B cell (primary cell): ENCODE measurements at regions of chr1 and their contacts with region 1.

Region 1: GRCh38 chr1:212477014-212477679 is 44.4 kb downstream of the NENF start:
- DNase-seq: peak; percentile 85
- ATAC-seq: peak; percentile 94
- H3K4me3 ChIP-seq: no peak overlapping the region
- H3K4me3 Mint-ChIP-seq: no peak overlapping the region
- H3K27ac ChIP-seq: no peak overlapping the region
- H3K27ac Mint-ChIP-seq: no peak overlapping the region
- H3K4me1 ChIP-seq: peaks cover 4 to 7% of the 10 kb centered on the region in 2 donors
- H3K4me1 Mint-ChIP-seq: peaks cover 6% of the 10 kb centered on the region
- H3K27me3 ChIP-seq: no peaks in the 10 kb centered on the region
- H3K27me3 Mint-ChIP-seq: peaks cover 22% of the 10 kb centered on the region
- CTCF ChIP-seq: peak; percentile 87

Region 2: DNA sequence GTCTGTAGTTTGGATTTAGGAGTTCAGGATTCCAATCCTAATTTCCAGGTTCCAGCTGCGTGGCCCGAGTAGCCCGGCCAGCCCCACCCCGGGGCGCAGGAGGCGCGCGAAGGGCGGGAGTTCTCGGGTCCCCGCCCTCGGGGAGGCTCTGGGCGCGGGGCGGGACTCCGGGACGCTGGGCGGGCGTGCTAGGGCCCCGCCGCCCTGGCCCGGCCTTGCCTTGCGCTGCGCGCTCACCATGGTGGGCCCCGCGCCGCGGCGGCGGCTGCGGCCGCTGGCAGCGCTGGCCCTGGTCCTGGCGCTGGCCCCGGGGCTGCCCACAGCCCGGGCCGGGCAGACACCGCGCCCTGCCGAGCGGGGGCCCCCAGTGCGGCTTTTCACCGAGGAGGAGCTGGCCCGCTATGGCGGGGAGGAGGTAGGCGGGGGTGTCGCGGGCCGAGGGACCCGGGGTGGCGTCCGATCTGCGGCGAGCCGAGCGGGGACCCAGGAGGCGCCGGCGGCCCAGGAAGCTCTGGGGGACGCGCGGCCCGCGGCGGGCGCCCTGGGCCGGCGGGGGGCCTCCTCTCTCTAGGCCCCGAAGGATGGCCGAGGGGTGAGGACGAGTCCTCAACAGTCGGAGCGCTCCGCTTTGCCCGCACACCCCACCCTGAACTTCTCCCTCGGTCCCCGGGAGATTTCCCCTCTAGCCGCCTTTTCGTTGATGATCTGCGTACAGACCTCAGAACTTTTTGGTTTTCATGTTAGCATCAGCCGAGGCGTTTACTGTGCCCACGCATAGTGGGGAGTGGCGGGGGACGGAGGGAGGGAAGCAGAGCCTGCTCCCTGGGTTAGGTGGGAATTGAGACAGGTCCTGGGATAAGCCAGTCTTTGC is 44.2 kb before region 1 on chr1 and contains the start of gene NENF:
- CTCF ChIA-PET with region 1: no interaction called
- POLR2A ChIA-PET with region 1: no interaction called
- intact Hi-C with region 1: no loop called
- DNase-seq: peak; percentile 81
- ATAC-seq: peak; percentile 99
- H3K4me3 ChIP-seq: peak within 1 kb of the TSS; percentile 26 to 82 (median 58)
- H3K4me3 Mint-ChIP-seq: peak within 1 kb of the TSS; percentile 82
- H3K27ac ChIP-seq: peak within 1 kb of the TSS in 1 of 2 donors; percentile 65
- H3K27ac Mint-ChIP-seq: peak within 1 kb of the TSS; percentile 33
- H3K4me1 ChIP-seq: peaks cover 12 to 15% of the 10 kb centered on the region in 2 donors
- H3K4me1 Mint-ChIP-seq: peaks cover 25% of the 10 kb centered on the region
- H3K27me3 ChIP-seq: no peaks in the 10 kb centered on the region
- H3K27me3 Mint-ChIP-seq: no peaks in the 10 kb centered on the region
- CTCF ChIP-seq: no peak
- total RNA-seq, gene NENF: 20.3 and 22.7 TPM in 2 replicates

Region 3: GRCh38 chr1:212463565-212464285 is 13.4 kb before region 1 on chr1:
- CTCF ChIA-PET with region 1: interaction called, 13 read pairs
- POLR2A ChIA-PET with region 1: no interaction called
- intact Hi-C with region 1: no loop called
- DNase-seq: no peak
- ATAC-seq: no peak
- H3K4me3 ChIP-seq: no peak overlapping the region
- H3K4me3 Mint-ChIP-seq: no peak overlapping the region
- H3K27ac ChIP-seq: no peak overlapping the region
- H3K27ac Mint-ChIP-seq: no peak overlapping the region
- H3K4me1 ChIP-seq: no peaks in the 10 kb centered on the region
- H3K4me1 Mint-ChIP-seq: no peaks in the 10 kb centered on the region
- H3K27me3 ChIP-seq: no peaks in the 10 kb centered on the region
- H3K27me3 Mint-ChIP-seq: peaks cover 6% of the 10 kb centered on the region
- CTCF ChIP-seq: no peak

Region 4: DNA sequence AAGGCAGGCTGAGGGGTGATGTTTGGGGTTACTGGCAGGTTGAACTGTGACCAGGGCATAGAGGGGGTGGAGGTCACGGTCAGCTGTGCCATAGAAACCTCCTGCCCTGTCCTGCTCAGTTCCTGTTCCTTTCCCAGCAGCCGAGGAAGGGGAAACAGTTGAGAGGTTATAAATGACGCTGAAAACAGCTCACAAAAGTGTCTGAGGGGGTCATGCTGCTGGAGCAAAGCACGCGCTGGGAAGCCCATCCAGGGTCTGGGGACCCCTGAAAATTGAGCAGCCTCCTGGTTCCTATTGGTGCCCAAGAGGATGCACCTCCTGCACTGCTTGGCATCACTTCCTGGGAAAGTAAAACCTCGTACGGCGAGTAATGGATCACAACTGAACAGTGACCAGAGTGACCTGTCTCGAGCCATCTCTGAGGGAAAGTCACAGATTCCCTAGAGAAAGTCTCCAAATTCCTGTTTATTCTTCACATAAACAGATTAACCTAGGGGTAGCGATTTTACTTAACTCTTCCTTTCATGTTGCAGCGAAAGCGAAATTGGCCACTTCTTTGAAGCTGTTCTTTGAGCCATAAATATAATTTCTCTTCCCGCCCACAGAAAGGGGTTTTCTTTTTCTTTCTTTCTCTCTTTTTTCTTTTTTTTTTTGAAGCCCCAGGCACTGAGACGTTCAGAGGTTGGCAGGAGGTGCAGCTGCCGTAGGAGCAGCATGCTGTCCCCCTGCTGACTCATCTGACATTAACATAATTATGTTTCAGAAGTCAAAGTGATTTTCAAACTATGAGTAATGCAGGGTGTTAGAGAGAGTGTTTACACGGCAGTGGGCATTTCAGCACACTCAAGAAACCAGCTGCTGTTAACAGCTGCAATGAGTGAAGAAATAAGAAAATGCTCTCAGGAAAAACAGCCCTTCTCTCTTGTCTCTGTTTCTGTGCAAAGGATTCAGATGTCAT is 89.7 kb after region 1 on chr1:
- CTCF ChIA-PET with region 1: interaction called, 9 read pairs
- POLR2A ChIA-PET with region 1: no interaction called
- intact Hi-C with region 1: loop called (anchors 5 kb)
- DNase-seq: peak; percentile 54
- ATAC-seq: peak; percentile 97
- H3K4me3 ChIP-seq: peak overlapping the region; percentile 66 to 96 (median 84)
- H3K4me3 Mint-ChIP-seq: peak overlapping the region; percentile 90
- H3K27ac ChIP-seq: peak overlapping the region; percentile 21 to 49
- H3K27ac Mint-ChIP-seq: peak overlapping the region; percentile 90
- H3K4me1 ChIP-seq: peaks cover 5 to 14% of the 10 kb centered on the region in 2 donors
- H3K4me1 Mint-ChIP-seq: peaks cover 21% of the 10 kb centered on the region
- H3K27me3 ChIP-seq: no peaks in the 10 kb centered on the region
- H3K27me3 Mint-ChIP-seq: peaks cover 6% of the 10 kb centered on the region
- CTCF ChIP-seq: no peak

Region 5: DNA sequence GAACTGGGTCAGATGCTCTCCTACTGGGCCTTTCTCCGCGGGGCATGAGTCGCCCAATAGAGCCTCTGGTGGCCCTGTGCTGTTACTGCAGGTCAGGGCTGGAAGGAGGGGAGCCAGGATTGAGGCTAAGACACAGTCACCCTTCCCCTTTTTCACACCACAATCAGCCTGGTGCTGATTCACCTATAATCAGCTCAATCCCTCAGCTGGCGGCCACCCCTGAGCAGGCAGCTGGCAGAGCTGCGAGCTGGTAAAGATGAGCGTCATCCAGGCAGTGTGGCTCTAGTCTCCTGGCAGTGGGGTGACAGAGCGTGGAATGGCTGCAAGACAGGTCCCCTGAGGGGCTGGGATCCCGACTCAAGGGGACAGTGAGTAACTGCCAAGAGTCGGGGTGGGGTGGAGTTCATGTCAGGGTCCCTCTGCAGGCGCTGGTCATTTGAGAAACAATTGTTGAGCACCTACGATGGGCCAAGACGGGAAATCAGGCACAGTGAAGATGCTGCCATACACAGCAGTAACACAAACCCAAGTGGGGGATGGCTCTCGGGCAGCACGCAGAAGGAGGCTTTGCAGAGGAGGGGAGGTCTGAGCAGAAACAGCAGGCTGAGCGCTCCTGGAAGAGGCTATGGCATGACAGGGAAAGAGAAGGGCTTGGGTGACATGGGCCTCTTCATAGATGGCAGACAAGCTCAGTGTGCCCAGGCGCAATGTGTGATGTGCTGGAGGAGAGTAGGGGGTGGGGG is 153.2 kb after region 1 on chr1:
- CTCF ChIA-PET with region 1: interaction called, 8 read pairs
- POLR2A ChIA-PET with region 1: interaction called, 4 read pairs
- intact Hi-C with region 1: loop called (anchors 1 kb)
- DNase-seq: peak; percentile 82
- ATAC-seq: peak; percentile 98
- H3K4me3 ChIP-seq: no peak overlapping the region
- H3K4me3 Mint-ChIP-seq: no peak overlapping the region
- H3K27ac ChIP-seq: no peak overlapping the region
- H3K27ac Mint-ChIP-seq: no peak overlapping the region
- H3K4me1 ChIP-seq: peaks cover 12 to 19% of the 10 kb centered on the region in 2 donors
- H3K4me1 Mint-ChIP-seq: peaks cover 9% of the 10 kb centered on the region
- H3K27me3 ChIP-seq: peaks cover 0 to 9% (median 1%) of the 10 kb centered on the region in 4 experiments
- H3K27me3 Mint-ChIP-seq: peaks cover 19% of the 10 kb centered on the region
- CTCF ChIP-seq: peak; percentile 86

Region 6: DNA sequence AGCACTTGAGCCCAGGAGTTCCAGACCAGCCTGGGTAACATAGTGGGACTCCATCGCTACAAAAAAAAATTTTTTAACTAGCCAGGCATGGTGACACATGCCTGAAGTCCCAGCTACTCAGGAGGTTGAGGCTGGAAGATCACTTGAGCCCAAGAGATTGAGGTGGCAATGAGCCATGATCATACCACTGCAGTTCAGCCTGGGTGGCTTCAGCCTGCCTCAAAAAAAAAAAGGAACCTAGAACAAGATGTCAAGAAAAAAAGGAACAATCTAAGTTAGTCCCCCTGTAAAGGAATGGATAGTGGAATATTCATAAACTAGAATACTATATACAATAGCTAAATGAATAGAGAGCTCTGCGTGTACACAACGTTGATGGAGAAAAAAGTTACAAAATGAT is 300.0 kb after region 1 on chr1:
- CTCF ChIA-PET with region 1: interaction called, 40 read pairs
- POLR2A ChIA-PET with region 1: no interaction called
- intact Hi-C with region 1: loop called (anchors 1 kb)
- DNase-seq: no peak
- ATAC-seq: no peak
- H3K4me3 ChIP-seq: no peak overlapping the region
- H3K4me3 Mint-ChIP-seq: no peak overlapping the region
- H3K27ac ChIP-seq: no peak overlapping the region
- H3K27ac Mint-ChIP-seq: no peak overlapping the region
- H3K4me1 ChIP-seq: no peaks in the 10 kb centered on the region
- H3K4me1 Mint-ChIP-seq: peaks cover 18% of the 10 kb centered on the region
- H3K27me3 ChIP-seq: no peaks in the 10 kb centered on the region
- H3K27me3 Mint-ChIP-seq: no peaks in the 10 kb centered on the region
- CTCF ChIP-seq: no peak

Region 7: GRCh38 chr1:212994926-212995325 is 517.8 kb after region 1 on chr1:
- CTCF ChIA-PET with region 1: interaction called, 32 read pairs
- POLR2A ChIA-PET with region 1: no interaction called
- intact Hi-C with region 1: loop called (anchors 1 kb)
- DNase-seq: no peak
- ATAC-seq: no peak
- H3K4me3 ChIP-seq: no peak overlapping the region
- H3K4me3 Mint-ChIP-seq: no peak overlapping the region
- H3K27ac ChIP-seq: no peak overlapping the region
- H3K27ac Mint-ChIP-seq: no peak overlapping the region
- H3K4me1 ChIP-seq: no peaks in the 10 kb centered on the region
- H3K4me1 Mint-ChIP-seq: peaks cover 2% of the 10 kb centered on the region
- H3K27me3 ChIP-seq: no peaks in the 10 kb centered on the region
- H3K27me3 Mint-ChIP-seq: no peaks in the 10 kb centered on the region
- CTCF ChIP-seq: no peak

Region 8: DNA sequence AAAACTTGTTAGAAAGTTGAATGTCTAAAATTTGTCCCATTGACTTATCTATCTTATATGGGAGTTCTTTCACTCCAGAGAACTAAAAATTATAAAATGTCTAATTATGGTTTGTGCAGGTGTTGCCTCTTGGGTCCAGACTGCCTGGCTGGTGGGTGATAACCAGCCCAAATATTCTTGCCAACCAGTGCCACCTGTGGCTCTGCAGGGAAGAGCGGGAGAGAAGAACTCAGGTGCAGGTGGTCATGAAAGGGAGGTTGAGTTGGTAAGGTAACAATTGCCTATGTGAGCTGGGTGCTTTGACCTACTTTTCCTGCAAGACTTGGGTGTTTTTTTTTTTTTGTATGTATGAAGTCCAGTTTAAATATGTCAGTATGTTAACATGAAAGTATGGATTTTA is 584.1 kb after region 1 on chr1:
- CTCF ChIA-PET with region 1: no interaction called
- POLR2A ChIA-PET with region 1: no interaction called
- intact Hi-C with region 1: no loop called
- DNase-seq: no peak
- ATAC-seq: no peak
- H3K4me3 ChIP-seq: no peak overlapping the region
- H3K4me3 Mint-ChIP-seq: no peak overlapping the region
- H3K27ac ChIP-seq: no peak overlapping the region
- H3K27ac Mint-ChIP-seq: no peak overlapping the region
- H3K4me1 ChIP-seq: peaks cover 4 to 6% of the 10 kb centered on the region in 2 donors
- H3K4me1 Mint-ChIP-seq: peaks cover 8% of the 10 kb centered on the region
- H3K27me3 ChIP-seq: no peaks in the 10 kb centered on the region
- H3K27me3 Mint-ChIP-seq: no peaks in the 10 kb centered on the region
- CTCF ChIP-seq: no peak